Gastrocnemius medialis (tissue), 4 donors: ENCODE measurements at regions of chr16 and their contacts with region 1.

Region 1: DNA sequence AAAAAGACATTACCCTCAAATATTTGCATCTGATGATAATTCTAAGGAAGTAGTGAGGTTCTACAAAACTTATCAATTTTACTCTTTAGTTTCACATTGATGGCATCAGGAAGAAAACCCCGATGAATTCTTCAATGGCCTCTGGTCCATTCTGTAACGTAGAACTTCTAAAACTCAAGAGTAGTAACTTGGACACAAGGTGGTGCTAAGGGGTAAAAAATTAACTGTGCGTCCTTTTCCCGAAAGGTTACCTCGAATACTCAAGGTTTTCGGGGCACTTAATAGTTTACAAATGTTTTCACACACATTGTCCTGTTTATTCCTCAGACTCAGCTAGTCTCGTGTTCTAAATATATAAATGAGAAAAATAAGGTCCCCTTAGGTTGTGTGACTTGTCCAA is 517.3 kb upstream of the ZFHX3 start:
- DNase-seq: no peak
- ATAC-seq: no peak
- H3K4me3 ChIP-seq: no peak overlapping the region
- H3K27ac ChIP-seq: no peak overlapping the region
- H3K4me1 ChIP-seq: no peaks in the 10 kb centered on the region
- H3K27me3 ChIP-seq: no peaks in the 10 kb centered on the region
- CTCF ChIP-seq: peak in 2 of 5 experiments; percentile 14 to 24
- POLR2A ChIP-seq: no peak

Region 2: DNA sequence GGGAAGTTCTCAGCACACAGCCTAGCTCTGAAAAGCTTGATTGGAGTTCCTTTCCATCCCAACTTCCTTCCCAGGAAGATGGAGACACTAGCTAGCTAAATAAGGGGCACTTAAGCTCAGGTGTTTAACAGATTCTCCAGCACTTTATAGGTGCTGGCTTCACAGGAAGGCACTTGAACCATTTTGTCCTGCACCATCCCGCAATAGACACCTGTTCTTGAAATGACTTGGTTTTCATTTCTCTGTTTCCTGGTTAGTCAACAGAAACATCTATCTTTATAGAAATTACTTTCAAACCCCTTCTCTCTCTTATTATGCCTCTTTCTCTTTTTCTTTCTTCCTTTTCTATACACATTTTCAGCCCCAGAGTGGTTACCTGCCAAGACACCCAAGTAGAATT is 107.4 kb before region 1 on chr16:
- in situ Hi-C with region 1: no loop called
- intact Hi-C with region 1: no loop called
- DNase-seq: no peak
- ATAC-seq: no peak
- H3K4me3 ChIP-seq: no peak overlapping the region
- H3K27ac ChIP-seq: no peak overlapping the region
- H3K4me1 ChIP-seq: no peaks in the 10 kb centered on the region
- H3K27me3 ChIP-seq: no peaks in the 10 kb centered on the region
- CTCF ChIP-seq: no peak
- POLR2A ChIP-seq: no peak

Region 3: DNA sequence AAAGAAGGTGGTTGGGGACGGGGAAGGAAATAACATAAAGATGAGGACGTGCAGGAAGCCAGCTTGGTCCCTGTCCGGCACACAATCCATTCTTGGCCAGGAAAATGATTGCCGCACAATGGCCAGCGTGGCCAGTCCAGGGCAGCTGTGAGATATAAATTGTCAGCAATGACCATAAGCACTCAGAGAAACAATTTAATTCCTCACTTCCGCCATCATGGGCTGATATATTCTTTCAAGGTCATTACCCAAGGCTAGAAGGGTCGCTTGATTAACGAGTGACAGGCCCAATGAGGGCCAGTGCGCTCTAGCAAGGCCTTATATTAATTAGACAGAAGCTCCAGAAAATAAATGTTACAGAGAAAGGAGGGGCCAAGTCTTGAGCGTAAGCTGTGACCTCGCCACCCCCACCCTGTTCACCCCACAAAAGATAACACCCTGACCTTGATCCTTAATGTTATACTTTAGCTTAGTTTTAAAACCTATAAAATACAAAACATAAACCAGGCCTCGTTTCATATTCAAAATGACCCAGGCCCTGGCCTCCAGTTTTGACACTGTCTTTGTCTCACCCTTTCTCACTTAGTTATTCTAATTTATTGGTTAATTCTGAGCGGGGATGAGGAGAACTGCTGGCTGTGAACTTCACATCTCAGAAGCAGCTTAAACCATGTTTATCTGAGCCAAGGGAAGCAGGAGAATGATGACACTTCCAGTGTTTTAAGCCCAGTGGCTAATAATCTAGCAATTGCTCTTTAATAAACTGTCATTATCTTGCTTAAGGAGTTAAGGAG is 39.1 kb before region 1 on chr16:
- in situ Hi-C with region 1: no loop called
- intact Hi-C with region 1: no loop called
- DNase-seq: no peak
- ATAC-seq: no peak
- H3K4me3 ChIP-seq: no peak overlapping the region
- H3K27ac ChIP-seq: no peak overlapping the region
- H3K4me1 ChIP-seq: peaks cover 20 to 22% of the 10 kb centered on the region in 2 donors
- H3K27me3 ChIP-seq: no peaks in the 10 kb centered on the region
- CTCF ChIP-seq: no peak
- POLR2A ChIP-seq: no peak

Region 4: DNA sequence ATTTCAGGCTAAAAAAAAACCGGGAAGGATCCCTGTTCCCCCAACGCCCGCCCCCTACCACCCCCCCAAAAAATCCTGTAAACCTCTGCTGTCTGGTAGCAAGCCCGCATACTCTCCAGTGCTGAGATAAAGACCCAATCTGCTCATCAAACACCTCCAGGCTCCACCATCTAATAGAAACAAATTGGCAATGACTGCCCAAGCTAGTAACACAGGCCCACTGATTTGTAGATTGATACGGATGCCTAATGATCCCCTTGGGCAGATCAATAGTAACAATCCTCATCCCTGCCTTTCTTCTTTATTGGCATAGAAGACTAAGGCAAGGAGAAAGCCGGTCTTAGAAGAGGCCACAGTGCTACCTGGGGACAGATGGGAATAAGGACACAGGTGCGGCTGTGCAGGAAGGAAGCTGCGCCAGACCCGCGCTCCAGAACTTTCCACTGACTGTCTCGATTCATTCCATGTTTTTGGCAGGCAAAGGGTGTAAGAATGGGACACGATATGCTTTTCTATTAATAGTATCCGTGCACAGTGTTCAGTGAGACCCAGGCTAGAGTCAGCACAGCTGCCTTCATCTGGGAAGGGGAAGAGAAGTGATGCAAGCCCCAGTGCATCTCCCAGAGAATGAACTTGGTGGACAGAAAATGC is 323.7 kb after region 1 on chr16:
- in situ Hi-C with region 1: loop called in 1 of 4 experiments (anchors 10 kb)
- intact Hi-C with region 1: no loop called
- DNase-seq: no peak
- ATAC-seq: no peak
- H3K4me3 ChIP-seq: no peak overlapping the region
- H3K27ac ChIP-seq: no peak overlapping the region
- H3K4me1 ChIP-seq: no peaks in the 10 kb centered on the region
- H3K27me3 ChIP-seq: peaks cover 0 to 17% (median 2%) of the 10 kb centered on the region in 3 donors
- CTCF ChIP-seq: no peak
- POLR2A ChIP-seq: no peak